Heart left ventricle (tissue), 16 donors: ENCODE measurements at regions of chr6 and their contacts with region 1.

Region 1: GRCh38 chr6:95431637-95432228 is 145.6 kb upstream of the MANEA start:
- DNase-seq: no peak
- ATAC-seq: no peak
- H3K4me3 ChIP-seq: no peak overlapping the region
- H3K27ac ChIP-seq: no peak overlapping the region
- H3K4me1 ChIP-seq: no peaks in the 10 kb centered on the region
- H3K27me3 ChIP-seq: no peaks in the 10 kb centered on the region
- CTCF ChIP-seq: peak; percentile 59 to 76 (median 69)
- POLR2A ChIP-seq: no peak

Region 2: DNA sequence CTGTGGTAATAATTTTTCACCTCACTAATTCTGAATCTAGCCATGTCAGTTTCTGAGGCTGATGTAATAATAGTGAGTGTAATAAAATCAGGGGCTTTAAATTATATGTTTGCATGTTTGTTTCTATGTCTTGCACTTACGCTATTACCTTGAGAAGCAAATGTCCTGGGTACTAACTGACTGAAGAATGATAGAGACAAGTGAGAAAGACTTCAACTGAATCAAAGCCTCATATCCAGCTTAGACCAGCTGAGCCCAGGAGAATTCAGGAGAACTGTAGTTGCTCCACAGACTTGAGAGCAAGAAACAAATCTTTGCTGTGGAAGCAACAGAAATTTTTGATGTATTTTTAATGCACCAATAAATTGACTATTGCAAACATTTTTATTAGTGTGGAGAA is 308.4 kb after region 1 on chr6:
- intact Hi-C with region 1: no loop called
- DNase-seq: no peak
- ATAC-seq: no peak
- H3K4me3 ChIP-seq: no peak overlapping the region
- H3K27ac ChIP-seq: no peak overlapping the region
- H3K4me1 ChIP-seq: no peaks in the 10 kb centered on the region
- H3K27me3 ChIP-seq: no peaks in the 10 kb centered on the region
- CTCF ChIP-seq: no peak
- POLR2A ChIP-seq: no peak

Region 3: GRCh38 chr6:95866732-95867131 is 435.0 kb after region 1 on chr6:
- intact Hi-C with region 1: loop called in 8 of 10 experiments (anchors 2 to 5 kb)
- DNase-seq: no peak
- ATAC-seq: no peak
- H3K4me3 ChIP-seq: no peak overlapping the region
- H3K27ac ChIP-seq: no peak overlapping the region
- H3K4me1 ChIP-seq: no peaks in the 10 kb centered on the region
- H3K27me3 ChIP-seq: peaks cover 0 to 8% (median 0%) of the 10 kb centered on the region in 9 donors
- CTCF ChIP-seq: peak in 7 of 12 donors; percentile 31 to 46 (median 41)
- POLR2A ChIP-seq: no peak

Region 4: GRCh38 chr6:95923518-95923917 is 491.8 kb after region 1 on chr6:
- intact Hi-C with region 1: loop called in 1 of 10 experiments (anchors 10 kb)
- DNase-seq: no peak
- ATAC-seq: no peak
- H3K4me3 ChIP-seq: no peak overlapping the region
- H3K27ac ChIP-seq: no peak overlapping the region
- H3K4me1 ChIP-seq: no peaks in the 10 kb centered on the region
- H3K27me3 ChIP-seq: no peaks in the 10 kb centered on the region
- CTCF ChIP-seq: peak in 5 of 12 donors; percentile 7 to 22 (median 15)
- POLR2A ChIP-seq: no peak